ENCODE measurements at regions of chr2 and their contacts with region 1.

Region 1: DNA sequence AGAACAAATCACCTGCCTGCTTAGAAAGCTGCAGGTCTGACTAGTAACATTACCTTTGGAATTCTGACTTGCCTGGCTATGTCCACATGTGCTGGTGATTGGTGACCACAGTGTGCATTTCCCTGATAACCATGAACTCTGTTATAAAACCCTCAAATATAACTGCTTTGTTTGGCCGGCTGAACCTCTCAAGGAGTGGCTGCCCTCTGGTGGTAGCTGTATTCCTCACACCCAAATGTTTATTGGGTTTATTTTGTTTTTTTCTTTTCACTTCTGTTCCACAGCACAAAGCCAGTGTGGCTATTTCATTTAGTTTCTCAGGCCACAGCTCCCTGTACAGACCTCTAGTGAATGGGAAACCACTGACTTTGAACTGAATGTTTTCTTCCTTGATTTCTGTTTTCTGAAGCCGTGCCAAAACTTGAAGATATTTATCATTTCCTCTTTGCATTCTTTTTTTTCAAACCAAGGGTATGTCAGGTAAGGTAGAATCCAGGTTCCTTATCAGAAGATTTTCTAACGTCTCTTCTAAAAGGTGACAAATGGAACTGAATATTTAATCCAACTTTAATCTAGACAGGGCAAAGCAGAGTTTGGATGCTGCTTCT is 549.0 kb upstream of the VRK2 start:
- DNase-seq: peak in 4 of 5 donors; percentile 6 to 26 (median 24)
- ATAC-seq: peak in 2 of 4 donors; percentile 41 to 50
- H3K4me3 ChIP-seq: no peak overlapping the region
- H3K27ac ChIP-seq: no peak overlapping the region
- H3K4me1 ChIP-seq: peaks cover 0 to 12% (median 0%) of the 10 kb centered on the region in 12 donors
- H3K27me3 ChIP-seq: no peaks in the 10 kb centered on the region
- CTCF ChIP-seq: peak; percentile 62 to 80 (median 71)
- POLR2A ChIP-seq: no peak

Region 2: GRCh38 chr2:56288838-56289580 is 1208.6 kb before region 1 on chr2:
- intact Hi-C with region 1: loop called in 1 of 10 experiments (anchors 10 kb)
- DNase-seq: no peak
- ATAC-seq: peak in 2 of 4 donors; percentile 34 to 36
- H3K4me3 ChIP-seq: no peak overlapping the region
- H3K27ac ChIP-seq: no peak overlapping the region
- H3K4me1 ChIP-seq: peaks cover 0 to 29% (median 7%) of the 10 kb centered on the region in 12 donors
- H3K27me3 ChIP-seq: no peaks in the 10 kb centered on the region
- CTCF ChIP-seq: peak in 8 of 12 donors; percentile 17 to 49 (median 26)
- POLR2A ChIP-seq: no peak

Region 3: DNA sequence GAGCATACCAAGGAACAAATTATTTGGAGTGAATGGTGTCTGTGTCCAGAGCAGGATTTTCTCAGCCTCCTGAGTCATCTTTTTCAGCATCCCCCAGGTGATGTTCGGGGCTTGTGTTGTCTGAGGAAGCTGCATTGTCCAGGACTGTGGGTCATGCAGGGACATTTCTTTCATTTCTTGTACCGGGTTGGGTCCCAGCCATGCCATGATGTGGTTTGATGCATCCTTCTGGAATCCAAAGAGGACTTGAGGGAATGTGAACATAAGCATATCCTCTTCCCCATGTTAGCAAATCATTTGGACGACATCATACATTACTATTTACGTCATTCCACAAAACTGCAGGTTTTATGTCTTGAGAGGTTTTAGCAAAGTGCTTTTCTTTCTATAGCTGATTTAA is 516.0 kb before region 1 on chr2:
- intact Hi-C with region 1: loop called in 1 of 10 experiments (anchors 10 kb)
- DNase-seq: no peak
- ATAC-seq: no peak
- H3K4me3 ChIP-seq: no peak overlapping the region
- H3K27ac ChIP-seq: no peak overlapping the region
- H3K4me1 ChIP-seq: no peaks in the 10 kb centered on the region
- H3K27me3 ChIP-seq: no peaks in the 10 kb centered on the region
- CTCF ChIP-seq: no peak
- POLR2A ChIP-seq: no peak

Region 4: DNA sequence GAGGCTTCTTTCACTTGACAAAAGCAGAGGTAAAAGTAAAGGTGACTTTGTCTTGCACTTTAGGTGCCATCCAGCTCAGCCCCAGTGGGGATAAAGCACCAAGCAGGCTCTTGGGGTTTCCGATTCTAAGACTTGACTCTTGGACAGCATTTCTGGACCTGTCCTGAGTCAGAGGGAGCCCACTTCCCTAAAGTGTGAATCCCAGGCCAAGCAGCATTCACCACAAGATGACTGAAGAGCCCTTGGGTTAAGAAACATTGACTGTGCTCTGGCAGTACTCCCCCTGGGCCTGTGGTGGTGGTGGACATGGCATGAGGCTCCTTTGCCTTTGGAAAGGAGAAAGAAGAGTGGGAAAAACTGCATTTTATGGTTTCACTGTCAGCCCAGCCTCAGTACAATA is 89.0 kb before region 1 on chr2:
- intact Hi-C with region 1: no loop called
- DNase-seq: no peak
- ATAC-seq: no peak
- H3K4me3 ChIP-seq: no peak overlapping the region
- H3K27ac ChIP-seq: no peak overlapping the region
- H3K4me1 ChIP-seq: no peaks in the 10 kb centered on the region
- H3K27me3 ChIP-seq: no peaks in the 10 kb centered on the region
- CTCF ChIP-seq: no peak
- POLR2A ChIP-seq: no peak

Measured in heart left ventricle (tissue), 16 donors.